ENCODE measurements at regions of chr2 and their contacts with region 1.

Region 1: GRCh38 chr2:172555522-172556283 is at the start of gene PDK1:
- DNase-seq: peak; percentile 81 to 95 (median 90)
- ATAC-seq: peak; percentile 92
- H3K4me3 ChIP-seq: peak within 1 kb of the TSS; percentile 77 to 98
- H3K4me3 Mint-ChIP-seq: peak within 1 kb of the TSS; percentile 94
- H3K27ac ChIP-seq: peak within 1 kb of the TSS; percentile 66 to 82
- H3K27ac Mint-ChIP-seq: peak within 1 kb of the TSS; percentile 86
- H3K4me1 ChIP-seq: peaks cover 33% of the 10 kb centered on the region
- H3K4me1 Mint-ChIP-seq: peaks cover 49% of the 10 kb centered on the region
- H3K27me3 ChIP-seq: no peaks in the 10 kb centered on the region
- H3K27me3 Mint-ChIP-seq: no peaks in the 10 kb centered on the region
- CTCF ChIP-seq: no peak
- total RNA-seq, gene PDK1: 34.1 to 36.6 TPM

Region 2: GRCh38 chr2:171160119-171160955 is 1395.4 kb before region 1 on chr2 and contains the start of gene TLK1:
- CTCF ChIA-PET with region 1: no interaction called
- POLR2A ChIA-PET with region 1: no interaction called
- intact Hi-C with region 1: loop called in 1 of 2 experiments (anchors 10 kb)
- DNase-seq: peak; percentile 55 to 88 (median 78)
- ATAC-seq: peak; percentile 56
- H3K4me3 ChIP-seq: peak within 1 kb of the TSS; percentile 75 to 92
- H3K4me3 Mint-ChIP-seq: peak within 1 kb of the TSS; percentile 90
- H3K27ac ChIP-seq: peak within 1 kb of the TSS; percentile 74 to 89
- H3K27ac Mint-ChIP-seq: peak within 1 kb of the TSS; percentile 94
- H3K4me1 ChIP-seq: peaks cover 44% of the 10 kb centered on the region
- H3K4me1 Mint-ChIP-seq: peaks cover 60% of the 10 kb centered on the region
- H3K27me3 ChIP-seq: no peaks in the 10 kb centered on the region
- H3K27me3 Mint-ChIP-seq: no peaks in the 10 kb centered on the region
- CTCF ChIP-seq: no peak
- total RNA-seq, gene TLK1: 95.7 to 107 TPM

Region 3: DNA sequence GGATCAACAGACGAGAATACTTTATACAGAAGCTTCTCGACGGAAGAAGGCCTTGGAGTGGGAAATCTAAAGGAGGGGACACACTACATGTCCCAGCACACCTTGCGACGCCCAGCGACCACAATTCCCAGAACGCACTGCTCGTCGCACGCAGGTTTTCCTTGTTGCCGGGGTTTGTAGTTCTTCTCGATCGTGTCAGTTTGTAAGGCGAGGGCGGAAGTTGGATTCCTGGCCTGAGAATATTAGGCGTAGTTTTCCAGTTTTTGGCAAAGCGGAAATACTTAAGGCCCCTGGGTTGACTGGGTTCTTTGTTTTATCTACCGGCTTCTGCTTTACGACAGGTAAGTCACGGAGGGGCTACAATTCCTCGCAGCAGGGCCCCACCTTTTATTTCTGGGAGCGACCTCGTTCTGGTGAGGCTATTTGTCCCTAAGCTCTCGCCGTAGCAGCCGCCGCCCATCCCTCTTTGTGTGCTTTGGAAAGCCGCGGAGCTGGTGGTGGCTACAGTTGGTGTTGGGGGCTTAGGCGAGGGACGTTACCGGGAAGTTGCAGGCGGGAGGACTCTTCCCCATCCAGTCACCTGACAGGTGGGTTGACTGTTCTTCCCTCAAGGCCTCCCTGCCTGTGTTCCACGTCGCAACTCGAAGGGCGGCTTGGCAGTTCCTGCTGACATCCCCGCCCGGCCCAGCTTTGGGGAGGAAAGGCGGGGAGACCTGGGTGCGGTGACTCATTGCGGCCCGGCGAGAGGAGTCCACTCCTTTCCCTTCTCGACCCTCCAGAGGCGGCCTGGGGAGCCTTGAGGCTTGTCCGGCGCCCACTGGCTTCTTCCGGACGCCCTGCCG is 868.2 kb before region 1 on chr2 and contains the start of gene DYNC1I2:
- CTCF ChIA-PET with region 1: no interaction called
- POLR2A ChIA-PET with region 1: no interaction called
- intact Hi-C with region 1: loop called (anchors 2 to 5 kb)
- DNase-seq: peak; percentile 33 to 89 (median 69)
- ATAC-seq: peak; percentile 76
- H3K4me3 ChIP-seq: peak within 1 kb of the TSS; percentile 89 to 93
- H3K4me3 Mint-ChIP-seq: peak within 1 kb of the TSS; percentile 94
- H3K27ac ChIP-seq: peak within 1 kb of the TSS; percentile 45 to 52
- H3K27ac Mint-ChIP-seq: peak within 1 kb of the TSS; percentile 91
- H3K4me1 ChIP-seq: peaks cover 11% of the 10 kb centered on the region
- H3K4me1 Mint-ChIP-seq: peaks cover 25% of the 10 kb centered on the region
- H3K27me3 ChIP-seq: no peaks in the 10 kb centered on the region
- H3K27me3 Mint-ChIP-seq: no peaks in the 10 kb centered on the region
- CTCF ChIP-seq: no peak
- total RNA-seq, gene DYNC1I2: 6.9 to 9.1 TPM

Region 4: GRCh38 chr2:171922230-171923022 is 633.3 kb before region 1 on chr2 and contains the start of gene HAT1:
- CTCF ChIA-PET with region 1: no interaction called
- POLR2A ChIA-PET with region 1: no interaction called
- intact Hi-C with region 1: loop called (anchors 1 kb)
- DNase-seq: peak; percentile 94 to 99 (median 97)
- ATAC-seq: peak; percentile 98
- H3K4me3 ChIP-seq: peak within 1 kb of the TSS; percentile 82 to 97
- H3K4me3 Mint-ChIP-seq: peak within 1 kb of the TSS; percentile 98
- H3K27ac ChIP-seq: peak within 1 kb of the TSS; percentile 94 to 96
- H3K27ac Mint-ChIP-seq: peak within 1 kb of the TSS; percentile 97
- H3K4me1 ChIP-seq: peaks cover 21% of the 10 kb centered on the region
- H3K4me1 Mint-ChIP-seq: peaks cover 45% of the 10 kb centered on the region
- H3K27me3 ChIP-seq: no peaks in the 10 kb centered on the region
- H3K27me3 Mint-ChIP-seq: no peaks in the 10 kb centered on the region
- CTCF ChIP-seq: no peak
- total RNA-seq, gene HAT1: 29.5 to 30.2 TPM

Region 5: DNA sequence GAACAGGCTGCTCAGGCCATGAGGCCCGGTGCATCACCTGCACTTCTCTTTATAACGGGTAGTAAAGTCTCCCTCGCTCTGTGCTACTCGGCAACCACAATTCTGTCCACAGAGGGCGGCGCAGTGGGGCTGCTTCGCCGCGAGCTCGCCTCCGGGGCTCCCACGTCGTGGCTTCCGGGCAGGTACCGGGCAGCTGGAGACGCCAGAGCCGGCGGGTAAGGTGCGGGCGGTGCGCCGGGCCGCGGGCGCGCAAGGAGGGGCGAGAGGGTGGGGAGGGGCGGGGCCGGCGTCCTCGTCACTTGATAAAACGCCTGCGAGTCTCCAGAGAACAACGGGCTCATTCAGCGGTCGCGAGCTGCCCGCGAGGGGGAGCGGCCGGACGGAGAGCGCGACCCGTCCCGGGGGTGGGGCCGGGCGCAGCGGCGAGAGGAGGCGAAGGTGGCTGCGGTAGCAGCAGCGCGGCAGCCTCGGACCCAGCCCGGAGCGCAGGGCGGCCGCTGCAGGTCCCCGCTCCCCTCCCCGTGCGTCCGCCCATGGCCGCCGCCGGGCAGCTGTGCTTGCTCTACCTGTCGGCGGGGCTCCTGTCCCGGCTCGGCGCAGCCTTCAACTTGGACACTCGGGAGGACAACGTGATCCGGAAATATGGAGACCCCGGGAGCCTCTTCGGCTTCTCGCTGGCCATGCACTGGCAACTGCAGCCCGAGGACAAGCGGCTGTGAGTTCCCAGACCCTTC is 128.3 kb before region 1 on chr2 and contains the start of gene ITGA6:
- CTCF ChIA-PET with region 1: no interaction called
- POLR2A ChIA-PET with region 1: interaction called, 4 read pairs
- intact Hi-C with region 1: loop called (anchors 1 to 5 kb)
- DNase-seq: peak; percentile 49 to 86 (median 74)
- ATAC-seq: peak; percentile 66
- H3K4me3 ChIP-seq: peak within 1 kb of the TSS; percentile 71 to 72
- H3K4me3 Mint-ChIP-seq: peak within 1 kb of the TSS; percentile 88
- H3K27ac ChIP-seq: peak within 1 kb of the TSS; percentile 43 to 73
- H3K27ac Mint-ChIP-seq: peak within 1 kb of the TSS; percentile 94
- H3K4me1 ChIP-seq: peaks cover 45% of the 10 kb centered on the region
- H3K4me1 Mint-ChIP-seq: peaks cover 59% of the 10 kb centered on the region
- H3K27me3 ChIP-seq: no peaks in the 10 kb centered on the region
- H3K27me3 Mint-ChIP-seq: no peaks in the 10 kb centered on the region
- CTCF ChIP-seq: no peak
- total RNA-seq, gene ITGA6: 50.5 to 52.1 TPM

Region 6: GRCh38 chr2:172516299-172516698 is 39.4 kb before region 1 on chr2:
- CTCF ChIA-PET with region 1: interaction called, 3 read pairs
- POLR2A ChIA-PET with region 1: no interaction called
- intact Hi-C with region 1: loop called in 1 of 2 experiments (anchors 5 kb)
- DNase-seq: no peak
- ATAC-seq: no peak
- H3K4me3 ChIP-seq: no peak overlapping the region
- H3K4me3 Mint-ChIP-seq: no peak overlapping the region
- H3K27ac ChIP-seq: no peak overlapping the region
- H3K27ac Mint-ChIP-seq: no peak overlapping the region
- H3K4me1 ChIP-seq: peaks cover 4% of the 10 kb centered on the region
- H3K4me1 Mint-ChIP-seq: peaks cover 8% of the 10 kb centered on the region
- H3K27me3 ChIP-seq: no peaks in the 10 kb centered on the region
- H3K27me3 Mint-ChIP-seq: no peaks in the 10 kb centered on the region
- CTCF ChIP-seq: no peak